ENCODE measurements at regions of chr3 and their contacts with region 1.

Region 1: GRCh38 chr3:38117748-38118420 is 19.0 kb downstream of the ACAA1 start:
- DNase-seq: peak; percentile 82 to 83
- H3K4me3 ChIP-seq: no peak overlapping the region
- H3K4me3 Mint-ChIP-seq: no peak overlapping the region
- H3K27ac Mint-ChIP-seq: peak overlapping the region; percentile 46
- H3K4me1 ChIP-seq: 0 out of 2 replicates have a peak, but pooled peaks cover 3% of the 10 kb centered on the region
- H3K4me1 Mint-ChIP-seq: peaks cover 28% of the 10 kb centered on the region
- H3K27me3 ChIP-seq: no peaks in the 10 kb centered on the region
- H3K27me3 Mint-ChIP-seq: no peaks in the 10 kb centered on the region
- CTCF ChIP-seq: peak; percentile 62 to 85

Region 2: DNA sequence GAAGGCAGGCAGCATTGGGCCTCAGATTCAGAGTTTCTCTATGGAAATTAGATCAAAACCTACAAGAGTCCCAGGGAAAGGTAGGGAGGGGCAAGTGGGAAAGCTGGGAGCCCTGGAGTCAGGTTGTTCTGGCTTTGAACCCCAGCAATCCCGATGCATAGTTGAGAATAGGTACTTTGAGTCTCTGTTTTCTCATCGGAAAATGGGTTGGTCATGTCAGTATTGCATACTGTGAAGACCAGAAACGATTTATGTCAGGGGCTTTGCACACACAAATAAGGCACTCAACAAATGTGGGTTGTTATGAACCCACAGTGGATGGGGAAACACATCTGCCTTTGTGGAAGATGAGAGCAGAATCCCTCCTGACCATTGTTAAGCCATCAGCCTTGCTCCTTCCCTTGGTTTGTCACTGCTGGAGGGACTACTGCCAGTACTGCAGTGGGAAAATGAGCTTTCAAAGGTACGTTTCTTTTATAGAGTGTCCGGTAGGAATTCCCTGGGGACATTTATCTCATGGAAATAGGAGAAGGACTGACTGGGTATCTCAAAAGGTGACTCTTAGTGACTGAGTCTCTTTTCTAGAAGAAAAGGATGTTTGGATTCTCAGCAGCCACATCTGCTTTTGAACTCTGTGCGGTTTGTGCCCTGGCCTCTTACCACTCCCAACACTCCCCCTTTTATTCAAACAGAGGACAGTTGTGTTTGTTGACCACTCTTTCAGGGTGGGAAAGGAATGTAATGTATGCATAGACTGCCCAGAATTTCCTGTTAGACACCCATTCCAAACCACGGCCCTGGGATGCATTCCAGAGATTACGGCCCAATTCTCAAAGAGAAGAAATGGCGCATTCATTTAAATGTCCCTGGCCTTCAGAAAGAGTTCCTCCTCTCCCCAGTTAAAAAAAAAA is 181.9 kb before region 1 on chr3:
- CTCF ChIA-PET with region 1: no interaction called
- POLR2A ChIA-PET with region 1: no interaction called
- intact Hi-C with region 1: no loop called
- DNase-seq: peak; percentile 77 to 84
- H3K4me3 ChIP-seq: no peak overlapping the region
- H3K4me3 Mint-ChIP-seq: peak overlapping the region; percentile 28
- H3K27ac Mint-ChIP-seq: peak overlapping the region; percentile 91
- H3K4me1 ChIP-seq: peaks cover 45% of the 10 kb centered on the region
- H3K4me1 Mint-ChIP-seq: peaks cover 41% of the 10 kb centered on the region
- H3K27me3 ChIP-seq: no peaks in the 10 kb centered on the region
- H3K27me3 Mint-ChIP-seq: no peaks in the 10 kb centered on the region
- CTCF ChIP-seq: no peak

Region 3: DNA sequence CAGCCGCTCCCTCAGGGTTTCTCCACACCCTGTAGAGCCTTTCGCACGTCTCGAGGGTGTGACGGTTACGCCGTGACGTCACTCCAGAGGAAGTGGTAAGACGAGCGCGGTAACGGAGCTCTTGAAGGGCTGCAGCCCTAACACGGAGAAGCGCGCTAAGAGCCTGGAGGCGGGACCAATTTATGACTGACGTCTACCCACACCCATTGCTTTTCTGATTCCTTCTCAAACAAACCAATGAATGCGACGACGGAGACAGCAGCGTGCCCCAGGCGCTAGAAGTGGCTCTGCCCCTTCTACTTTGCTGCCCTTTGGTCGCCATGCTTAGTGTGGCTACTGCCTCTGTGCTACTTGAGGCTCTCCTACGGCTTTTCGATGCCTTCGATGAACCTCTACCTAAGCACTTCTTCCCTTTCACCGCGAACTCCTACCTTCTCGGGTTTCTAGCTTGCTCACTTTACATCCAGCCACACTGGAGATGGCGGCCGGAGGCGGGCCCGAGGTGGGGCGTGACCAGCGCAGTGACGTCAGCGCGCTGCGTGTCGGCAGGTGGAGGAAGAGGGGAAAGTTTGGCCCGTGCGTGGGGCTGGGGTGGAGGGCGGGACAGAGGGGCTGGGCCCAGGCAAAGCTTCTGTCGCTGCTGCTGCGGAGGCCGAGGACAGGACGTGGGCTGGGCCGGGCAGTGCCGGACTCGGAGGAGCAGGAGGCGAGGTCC is 47.2 kb after region 1 on chr3 and contains the start of gene OXSR1:
- CTCF ChIA-PET with region 1: interaction called, 8 read pairs
- POLR2A ChIA-PET with region 1: interaction called, 7 read pairs
- intact Hi-C with region 1: loop called (anchors 1 kb)
- DNase-seq: peak; percentile 95 to 99
- H3K4me3 ChIP-seq: peak within 1 kb of the TSS; percentile 78
- H3K4me3 Mint-ChIP-seq: peak within 1 kb of the TSS; percentile 89
- H3K27ac Mint-ChIP-seq: peak within 1 kb of the TSS; percentile 98
- H3K4me1 ChIP-seq: peaks cover 5% of the 10 kb centered on the region
- H3K4me1 Mint-ChIP-seq: peaks cover 25% of the 10 kb centered on the region
- H3K27me3 ChIP-seq: no peaks in the 10 kb centered on the region
- H3K27me3 Mint-ChIP-seq: no peaks in the 10 kb centered on the region
- CTCF ChIP-seq: no peak
- total RNA-seq, gene OXSR1: 39.2 and 39.3 TPM in 2 replicates

Region 4: DNA sequence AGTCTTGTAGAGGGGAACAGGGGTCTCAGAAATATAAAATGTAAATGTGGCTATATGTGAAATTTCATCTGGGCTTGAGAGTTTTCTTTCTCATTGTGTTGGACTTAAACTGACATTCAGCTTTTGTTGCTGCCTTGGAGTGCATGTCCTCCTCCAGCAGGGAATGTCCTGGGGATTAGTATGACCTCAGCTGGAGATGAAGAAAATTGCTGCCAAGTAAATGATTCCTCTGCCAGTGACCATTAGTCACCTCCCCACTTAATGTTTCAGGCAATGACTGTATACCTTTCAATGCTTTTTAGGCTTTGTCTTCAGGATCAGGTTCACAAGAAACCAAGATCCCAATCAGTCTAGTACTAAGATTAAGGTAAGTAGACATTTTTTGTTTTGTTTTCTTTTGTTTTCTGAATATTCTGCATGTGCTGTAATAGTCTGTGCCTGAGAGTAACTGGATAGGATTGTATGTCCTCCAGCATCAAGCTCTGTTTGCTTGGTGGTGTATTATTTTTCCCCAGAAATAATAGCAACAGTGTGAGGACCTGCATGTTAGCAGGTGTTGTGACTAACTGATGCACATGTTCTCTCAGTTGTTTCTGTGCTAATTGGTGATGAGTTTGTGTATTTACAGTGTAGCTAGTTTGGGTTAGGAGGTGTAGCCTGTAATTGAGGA is 129.6 kb after region 1 on chr3:
- CTCF ChIA-PET with region 1: no interaction called
- POLR2A ChIA-PET with region 1: no interaction called
- intact Hi-C with region 1: loop called (anchors 1 kb)
- DNase-seq: peak in 1 of 2 experiments; percentile 16
- H3K4me3 ChIP-seq: no peak overlapping the region
- H3K4me3 Mint-ChIP-seq: no peak overlapping the region
- H3K27ac Mint-ChIP-seq: no peak overlapping the region
- H3K4me1 ChIP-seq: no peaks in the 10 kb centered on the region
- H3K4me1 Mint-ChIP-seq: no peaks in the 10 kb centered on the region
- H3K27me3 ChIP-seq: no peaks in the 10 kb centered on the region
- H3K27me3 Mint-ChIP-seq: no peaks in the 10 kb centered on the region
- CTCF ChIP-seq: peak in 1 of 2 experiments; percentile 18

Region 5: DNA sequence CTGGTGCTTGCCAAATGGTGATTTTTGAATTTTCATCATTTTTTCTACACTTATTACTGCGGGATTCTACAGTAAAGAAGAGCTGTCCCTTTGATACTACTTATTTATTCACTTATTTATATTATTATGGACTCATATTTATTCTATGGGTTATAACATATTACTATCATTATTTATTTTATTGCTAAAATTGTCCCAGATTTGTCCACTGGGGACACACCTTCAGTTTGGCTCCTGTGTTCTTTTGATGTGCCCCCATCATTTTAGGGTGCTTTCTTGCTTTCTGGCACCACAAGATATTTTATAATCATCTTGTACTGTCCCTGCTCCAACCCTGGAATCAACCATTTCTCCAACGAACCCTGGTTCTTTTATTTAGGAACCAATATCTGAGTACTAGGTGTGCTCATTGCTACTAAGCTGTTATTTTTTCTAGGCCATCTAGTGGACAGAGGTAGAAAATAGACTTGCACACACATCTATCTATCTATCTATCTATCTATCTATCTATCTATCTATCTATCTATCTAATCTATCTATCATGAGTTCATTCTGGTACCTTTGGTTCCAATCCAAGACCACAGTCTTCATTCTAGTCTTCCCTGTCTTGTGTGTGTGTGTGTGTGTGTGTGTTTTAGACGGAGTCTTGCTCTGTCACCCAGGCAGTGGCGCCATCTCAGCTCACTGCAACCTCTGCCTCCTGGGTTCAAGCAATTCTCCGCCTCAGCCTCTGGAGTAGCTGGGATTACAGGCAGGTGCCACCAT is 180.2 kb after region 1 on chr3:
- CTCF ChIA-PET with region 1: no interaction called
- POLR2A ChIA-PET with region 1: no interaction called
- intact Hi-C with region 1: loop called (anchors 1 kb)
- DNase-seq: no peak
- H3K4me3 ChIP-seq: no peak overlapping the region
- H3K4me3 Mint-ChIP-seq: no peak overlapping the region
- H3K27ac Mint-ChIP-seq: no peak overlapping the region
- H3K4me1 ChIP-seq: no peaks in the 10 kb centered on the region
- H3K4me1 Mint-ChIP-seq: no peaks in the 10 kb centered on the region
- H3K27me3 ChIP-seq: no peaks in the 10 kb centered on the region
- H3K27me3 Mint-ChIP-seq: peaks cover 4% of the 10 kb centered on the region
- CTCF ChIP-seq: peak; percentile 44 to 58